Natural killer cell (primary cell): ENCODE measurements at regions of chr16 and their contacts with region 1.

Region 1: GRCh38 chr16:2905431-2906387 is 6.0 kb upstream of the FLYWCH1 start:
- DNase-seq: peak; percentile 91 to 96
- ATAC-seq: peak; percentile 79 to 92 (median 82)
- H3K4me3 ChIP-seq: peak overlapping the region; percentile 83
- H3K4me3 Mint-ChIP-seq: peak overlapping the region; percentile 70
- H3K27ac ChIP-seq: peak overlapping the region; percentile 75
- H3K27ac Mint-ChIP-seq: peak overlapping the region; percentile 90 to 93
- H3K4me1 ChIP-seq: peaks cover 32% of the 10 kb centered on the region
- H3K4me1 Mint-ChIP-seq: peaks cover 20 to 33% of the 10 kb centered on the region in 2 donors
- H3K27me3 ChIP-seq: no peaks in the 10 kb centered on the region
- H3K27me3 Mint-ChIP-seq: no peaks in the 10 kb centered on the region
- CTCF ChIP-seq: no peak

Region 2: DNA sequence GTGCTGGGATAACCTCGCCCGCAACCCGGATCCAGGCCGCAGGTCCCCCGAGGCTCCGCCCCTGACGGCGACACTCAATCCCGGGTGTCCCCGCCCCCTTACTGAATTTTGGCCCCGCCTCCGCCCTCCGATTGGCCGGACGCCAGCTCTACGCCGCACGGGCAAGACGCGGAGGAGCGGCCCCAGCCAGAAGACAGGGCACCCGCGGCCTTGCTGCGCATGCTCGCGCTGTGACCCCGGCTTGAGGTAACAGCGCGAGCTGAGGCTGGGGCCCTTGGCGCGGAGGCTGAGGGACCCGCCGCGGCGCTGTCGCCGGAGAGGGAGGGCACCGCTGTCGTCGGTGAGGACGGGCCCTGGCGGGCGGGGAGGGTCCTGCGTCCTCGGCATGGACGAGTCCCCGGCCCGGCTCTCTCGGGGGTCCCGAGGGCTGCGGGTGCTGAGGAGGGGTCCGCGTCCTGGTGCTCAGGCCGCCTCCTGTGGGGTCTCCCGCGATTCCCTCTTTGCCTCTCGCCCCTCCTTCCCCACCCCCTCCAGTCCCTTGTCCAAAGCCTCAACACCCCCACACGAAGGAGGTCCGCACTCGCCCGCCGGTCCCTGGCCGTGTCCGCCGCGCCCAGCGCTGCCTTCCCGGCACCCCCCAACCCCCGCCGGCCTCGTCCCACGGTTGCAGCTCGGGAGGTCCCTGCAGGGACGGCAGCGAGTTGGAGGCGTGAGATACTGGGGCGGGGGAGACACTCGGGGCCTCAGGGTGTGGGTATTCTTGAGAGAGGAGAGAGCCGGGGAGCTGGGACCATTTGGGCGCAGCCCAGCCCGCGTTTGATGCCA is 22.5 kb before region 1 on chr16 and contains the start of gene FLYWCH2:
- intact Hi-C with region 1: loop called (anchors 1 kb)
- DNase-seq: peak; percentile 99 to 100
- ATAC-seq: peak; percentile 81 to 93 (median 82)
- H3K4me3 ChIP-seq: peak within 1 kb of the TSS; percentile 66
- H3K4me3 Mint-ChIP-seq: peak within 1 kb of the TSS; percentile 89
- H3K27ac ChIP-seq: peak within 1 kb of the TSS; percentile 91
- H3K27ac Mint-ChIP-seq: peak within 1 kb of the TSS; percentile 94 to 96
- H3K4me1 ChIP-seq: peaks cover 15% of the 10 kb centered on the region
- H3K4me1 Mint-ChIP-seq: peaks cover 7 to 18% of the 10 kb centered on the region in 2 donors
- H3K27me3 ChIP-seq: no peaks in the 10 kb centered on the region
- H3K27me3 Mint-ChIP-seq: no peaks in the 10 kb centered on the region
- CTCF ChIP-seq: no peak
- total RNA-seq, gene FLYWCH2: 12.0 to 12.7 (median 12.6) TPM

Region 3: GRCh38 chr16:2919511-2920255 is 14.0 kb after region 1 on chr16:
- intact Hi-C with region 1: loop called (anchors 2 kb)
- DNase-seq: peak; percentile 51 to 88
- ATAC-seq: peak; percentile 76 to 97 (median 78)
- H3K4me3 ChIP-seq: no peak overlapping the region
- H3K4me3 Mint-ChIP-seq: no peak overlapping the region
- H3K27ac ChIP-seq: no peak overlapping the region
- H3K27ac Mint-ChIP-seq: peak overlapping the region; percentile 58 to 83
- H3K4me1 ChIP-seq: peaks cover 3% of the 10 kb centered on the region
- H3K4me1 Mint-ChIP-seq: peaks cover 5 to 7% of the 10 kb centered on the region in 2 donors
- H3K27me3 ChIP-seq: no peaks in the 10 kb centered on the region
- H3K27me3 Mint-ChIP-seq: no peaks in the 10 kb centered on the region
- CTCF ChIP-seq: peak; percentile 89

Region 4: GRCh38 chr16:2926650-2927646 is 21.2 kb after region 1 on chr16:
- intact Hi-C with region 1: loop called (anchors 2 kb)
- DNase-seq: peak; percentile 81 to 95
- ATAC-seq: peak; percentile 100
- H3K4me3 ChIP-seq: no peak overlapping the region
- H3K4me3 Mint-ChIP-seq: no peak overlapping the region
- H3K27ac ChIP-seq: no peak overlapping the region
- H3K27ac Mint-ChIP-seq: peak overlapping the region in 1 of 2 donors; percentile 46
- H3K4me1 ChIP-seq: peaks cover 7% of the 10 kb centered on the region
- H3K4me1 Mint-ChIP-seq: peaks cover 9 to 16% of the 10 kb centered on the region in 2 donors
- H3K27me3 ChIP-seq: no peaks in the 10 kb centered on the region
- H3K27me3 Mint-ChIP-seq: no peaks in the 10 kb centered on the region
- CTCF ChIP-seq: peak; percentile 97

Region 5: DNA sequence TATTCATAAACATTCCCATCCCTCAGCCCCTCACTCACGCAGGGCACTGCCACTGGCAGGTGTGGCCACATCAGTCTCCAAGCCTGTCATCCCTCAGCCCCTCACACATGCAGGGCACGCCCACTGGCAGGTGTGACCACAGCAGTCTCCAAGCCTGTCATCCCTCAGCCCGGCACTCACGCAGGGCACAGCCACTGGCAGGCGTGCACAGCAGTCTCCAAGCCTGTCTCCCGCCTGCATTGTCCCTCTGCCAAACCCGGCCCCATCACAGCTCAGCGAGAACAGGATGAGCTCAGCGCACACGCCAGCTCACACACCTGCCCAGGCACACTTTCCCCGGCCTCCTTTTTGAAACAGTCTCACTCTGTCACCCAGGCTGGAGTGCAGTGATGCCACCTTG is 47.0 kb after region 1 on chr16:
- intact Hi-C with region 1: no loop called
- DNase-seq: no peak
- ATAC-seq: no peak
- H3K4me3 ChIP-seq: no peak overlapping the region
- H3K4me3 Mint-ChIP-seq: no peak overlapping the region
- H3K27ac ChIP-seq: no peak overlapping the region
- H3K27ac Mint-ChIP-seq: no peak overlapping the region
- H3K4me1 ChIP-seq: peaks cover 7% of the 10 kb centered on the region
- H3K4me1 Mint-ChIP-seq: no peaks in the 10 kb centered on the region
- H3K27me3 ChIP-seq: peaks cover 6% of the 10 kb centered on the region
- H3K27me3 Mint-ChIP-seq: peaks cover 0 to 3% of the 10 kb centered on the region in 2 donors
- CTCF ChIP-seq: no peak